Activated CD4-positive, alpha-beta T cell treated with anti-CD3 and anti-CD28 coated beads, Interleukin-2, amount 10 ng/mL, durations not matched to agents 24 days and 14 days (primary cell): ENCODE measurements at regions of chr14 and their contacts with region 1.

Region 1: DNA sequence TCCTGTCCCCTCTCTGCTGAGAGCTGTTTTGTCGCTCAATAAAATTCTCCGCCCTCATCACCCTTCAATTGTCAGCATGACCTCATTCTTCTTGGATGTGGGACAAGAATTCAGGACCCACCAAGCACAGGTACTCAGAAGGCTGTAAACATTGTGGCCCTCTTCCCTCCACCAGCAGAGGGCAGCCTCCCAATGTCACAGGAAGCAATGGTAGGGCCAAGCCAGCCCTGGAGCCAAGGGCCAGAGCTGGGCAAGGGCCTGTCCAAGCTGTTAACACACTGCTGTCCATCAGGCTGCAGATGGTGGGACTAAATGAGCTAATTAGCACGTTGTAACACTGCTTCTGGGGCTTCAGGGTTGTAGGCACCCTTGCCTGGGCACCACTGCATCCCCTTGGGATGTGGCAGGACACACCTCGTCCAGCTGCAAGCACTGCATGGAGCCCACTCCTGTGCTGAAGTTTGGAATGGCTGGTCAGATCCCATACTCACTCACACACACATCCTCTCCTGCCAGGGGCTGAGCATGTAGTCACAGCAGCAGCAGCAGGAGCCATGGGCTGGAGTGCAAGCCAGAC is 62.7 kb upstream of the HECTD1 start:
- DNase-seq: peak; percentile 68
- H3K4me3 Mint-ChIP-seq: no peak overlapping the region
- H3K27ac Mint-ChIP-seq: no peak overlapping the region
- H3K4me1 Mint-ChIP-seq: peaks cover 5% of the 10 kb centered on the region
- H3K27me3 Mint-ChIP-seq: no peaks in the 10 kb centered on the region

Region 2: DNA sequence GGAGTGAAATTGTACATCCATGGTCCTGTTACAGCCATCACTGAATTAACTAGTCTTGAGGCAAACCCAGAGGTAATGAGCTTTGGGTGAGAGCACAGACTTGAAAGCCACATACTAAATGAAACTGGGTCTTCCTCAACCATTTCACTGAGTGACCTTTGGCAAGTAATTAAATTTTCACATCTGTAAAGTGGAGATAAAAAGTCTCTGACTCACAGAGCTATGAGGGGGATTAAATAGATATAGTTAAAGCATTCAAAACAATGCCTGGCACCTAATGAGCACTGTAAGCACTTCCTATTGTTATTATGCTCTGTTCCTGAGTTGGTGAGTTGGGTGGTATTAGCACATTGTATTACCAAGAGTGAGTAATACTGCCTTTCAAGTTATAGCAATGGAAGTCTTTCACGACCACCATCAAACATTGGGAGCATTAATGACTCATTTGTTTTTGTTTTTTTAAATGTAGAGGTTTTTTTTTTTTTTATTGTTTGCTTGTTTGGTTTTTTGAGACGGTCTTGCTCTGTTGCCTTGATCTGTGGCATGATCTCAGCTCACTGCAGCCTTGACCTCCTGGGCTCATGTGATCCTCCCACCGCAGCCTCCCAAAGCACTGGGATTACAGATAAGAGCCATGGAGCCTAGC is 231.6 kb before region 1 on chr14:
- intact Hi-C with region 1: no loop called
- DNase-seq: no peak
- H3K4me3 Mint-ChIP-seq: no peak overlapping the region
- H3K27ac Mint-ChIP-seq: no peak overlapping the region
- H3K4me1 Mint-ChIP-seq: peaks cover 3% of the 10 kb centered on the region
- H3K27me3 Mint-ChIP-seq: no peaks in the 10 kb centered on the region

Region 3: DNA sequence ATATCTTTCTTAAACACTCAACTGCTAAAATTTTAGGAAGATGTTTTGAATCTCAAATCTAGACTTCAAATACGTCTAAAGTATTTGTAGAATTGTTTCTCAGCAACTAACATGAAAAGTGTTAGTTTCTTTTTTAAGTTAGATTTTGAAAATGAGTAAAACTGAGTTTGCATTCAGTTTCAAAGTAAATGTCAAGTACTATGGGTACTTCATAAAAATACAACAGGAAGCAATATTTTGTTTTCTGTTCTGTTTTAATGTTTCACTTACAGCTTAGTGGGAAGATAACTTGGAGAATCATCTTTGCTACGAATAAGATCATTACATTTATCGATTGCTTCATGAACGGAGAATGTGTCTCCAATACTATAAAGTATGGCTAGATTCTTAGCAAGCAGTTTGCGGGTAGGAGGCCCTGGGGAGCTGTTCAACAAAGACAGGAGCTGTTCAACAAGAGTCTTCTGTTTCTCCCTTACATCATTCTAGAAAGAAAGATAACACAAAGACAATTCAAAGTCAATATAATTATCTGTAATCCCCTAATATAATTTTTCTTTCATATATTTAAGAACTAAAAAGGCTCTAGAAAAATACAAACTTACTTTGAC is 129.9 kb after region 1 on chr14:
- intact Hi-C with region 1: loop called (anchors 5 kb)
- DNase-seq: no peak
- H3K4me3 Mint-ChIP-seq: peak overlapping the region; percentile 28
- H3K27ac Mint-ChIP-seq: peak overlapping the region; percentile 80
- H3K4me1 Mint-ChIP-seq: peaks cover 19% of the 10 kb centered on the region
- H3K27me3 Mint-ChIP-seq: no peaks in the 10 kb centered on the region

Region 4: GRCh38 chr14:31449971-31450610 is 179.8 kb after region 1 on chr14:
- intact Hi-C with region 1: loop called (anchors 2 kb)
- DNase-seq: no peak
- H3K4me3 Mint-ChIP-seq: no peak overlapping the region
- H3K27ac Mint-ChIP-seq: no peak overlapping the region
- H3K4me1 Mint-ChIP-seq: peaks cover 2% of the 10 kb centered on the region
- H3K27me3 Mint-ChIP-seq: no peaks in the 10 kb centered on the region